ENCODE measurements at regions of chr3 and their contacts with region 1.

Region 1: GRCh38 chr3:107064445-107065060 is 312.7 kb upstream of the CCDC54 start:
- DNase-seq: peak; percentile 57
- ATAC-seq: peak; percentile 83
- H3K4me3 ChIP-seq: no peak overlapping the region
- H3K27ac ChIP-seq: no peak overlapping the region
- H3K4me1 ChIP-seq: peaks cover 7 to 10% of the 10 kb centered on the region in 2 experiments; a peak in 3 of 4 replicates
- H3K27me3 ChIP-seq: no peaks in the 10 kb centered on the region
- CTCF ChIP-seq: peak; percentile 45 to 88 (median 86); a peak in 5 of 6 replicates
- POLR2A ChIP-seq: no peak
- RAD21 ChIP-seq: peak; percentile 80

Region 2: DNA sequence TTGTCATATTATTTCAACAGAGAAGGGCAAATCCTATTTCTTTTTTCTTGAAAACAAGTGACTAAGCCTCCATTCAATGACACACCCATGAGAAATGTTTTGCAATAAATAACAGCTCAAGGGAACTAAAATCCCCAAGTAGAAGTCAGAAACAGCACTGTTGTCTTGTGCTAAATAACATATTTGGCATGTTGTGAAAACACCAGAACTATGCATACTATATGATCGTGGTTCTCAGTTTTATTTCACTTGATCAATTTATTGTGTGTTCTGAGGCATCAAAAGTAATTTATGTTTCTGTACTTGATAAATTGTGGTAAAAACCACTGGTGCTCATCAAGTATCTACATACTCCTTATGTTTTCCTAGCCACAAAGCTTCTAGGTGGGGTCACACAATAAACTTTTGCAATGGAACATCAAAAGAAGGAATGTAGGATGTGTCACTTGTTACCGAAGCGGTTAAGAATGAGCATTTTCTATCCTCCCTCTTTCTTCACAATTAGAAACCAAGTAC is 504.0 kb before region 1 on chr3:
- CTCF ChIA-PET with region 1: no interaction called
- POLR2A ChIA-PET with region 1: no interaction called
- RAD21 ChIA-PET with region 1: no interaction called
- intact Hi-C with region 1: no loop called
- DNase-seq: no peak
- ATAC-seq: peak; percentile 69; the same call in 1 of the 2 replicates
- H3K4me3 ChIP-seq: no peak overlapping the region
- H3K27ac ChIP-seq: no peak overlapping the region
- H3K4me1 ChIP-seq: peaks cover 0 to 13% of the 10 kb centered on the region in 2 experiments; a peak in 2 of 4 replicates
- H3K27me3 ChIP-seq: no peaks in the 10 kb centered on the region
- CTCF ChIP-seq: no peak
- POLR2A ChIP-seq: no peak
- RAD21 ChIP-seq: no peak

Region 3: DNA sequence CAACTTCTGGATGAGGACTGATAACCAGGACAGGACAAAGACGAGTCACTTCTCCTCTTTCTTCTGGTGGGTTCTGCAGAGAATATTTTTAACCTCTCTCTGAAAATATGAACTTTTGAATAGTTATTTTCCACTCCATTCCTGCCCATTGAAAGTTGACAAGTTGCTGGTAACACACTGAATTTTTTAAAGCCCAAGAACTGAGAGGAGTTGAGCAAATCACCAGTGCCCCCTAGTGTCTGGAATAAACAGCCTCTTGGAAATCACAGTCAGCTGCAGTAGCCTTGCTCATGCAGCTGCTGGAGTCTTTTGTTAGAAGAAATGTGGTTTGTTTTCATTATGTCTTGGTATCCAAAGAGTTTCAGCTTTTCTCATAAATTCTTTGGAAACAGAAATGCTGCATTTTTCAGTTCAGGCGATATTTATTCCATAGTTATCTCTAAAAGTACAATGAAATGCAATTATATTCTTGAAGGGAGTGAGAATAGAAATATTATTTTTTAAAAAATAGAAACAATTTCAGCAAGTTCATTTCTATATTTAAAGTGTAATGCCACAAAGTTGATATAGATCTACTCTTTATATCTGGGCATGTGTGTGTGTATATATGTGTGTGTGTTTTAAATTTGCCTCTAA is 454.8 kb before region 1 on chr3:
- CTCF ChIA-PET with region 1: no interaction called
- POLR2A ChIA-PET with region 1: no interaction called
- RAD21 ChIA-PET with region 1: no interaction called
- intact Hi-C with region 1: loop called (anchors 1 kb)
- DNase-seq: peak; percentile 62
- ATAC-seq: peak; percentile 82
- H3K4me3 ChIP-seq: no peak overlapping the region
- H3K27ac ChIP-seq: no peak overlapping the region
- H3K4me1 ChIP-seq: no peaks in the 10 kb centered on the region
- H3K27me3 ChIP-seq: no peaks in the 10 kb centered on the region
- CTCF ChIP-seq: peak; percentile 55 to 86 (median 82); a peak in 5 of 6 replicates
- POLR2A ChIP-seq: no peak
- RAD21 ChIP-seq: peak; percentile 85

Region 4: DNA sequence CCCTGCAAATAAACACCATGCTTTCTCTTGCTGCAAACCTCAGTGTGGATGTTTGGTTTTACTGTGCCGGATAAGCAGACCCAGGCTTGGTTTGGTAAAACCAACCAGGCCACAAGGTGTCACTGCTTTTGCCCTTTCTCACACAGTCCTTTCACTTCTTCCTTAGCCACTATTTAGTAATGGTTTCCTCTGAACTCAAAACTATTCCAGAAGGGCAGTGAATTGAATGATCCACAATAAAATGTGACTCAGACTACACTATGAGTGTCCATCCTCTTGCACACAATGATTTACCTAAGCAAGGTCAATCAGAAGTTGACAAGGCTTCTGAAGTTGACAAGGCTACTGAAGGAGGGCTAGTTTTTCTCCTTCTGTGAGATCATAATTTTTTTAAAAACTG is 239.7 kb before region 1 on chr3:
- CTCF ChIA-PET with region 1: no interaction called
- POLR2A ChIA-PET with region 1: no interaction called
- RAD21 ChIA-PET with region 1: no interaction called
- intact Hi-C with region 1: loop called (anchors 2 kb)
- DNase-seq: peak; percentile 12
- ATAC-seq: peak; percentile 84
- H3K4me3 ChIP-seq: no peak overlapping the region
- H3K27ac ChIP-seq: no peak overlapping the region
- H3K4me1 ChIP-seq: no peaks in the 10 kb centered on the region
- H3K27me3 ChIP-seq: no peaks in the 10 kb centered on the region
- CTCF ChIP-seq: peak; percentile 34 to 50 (median 50); a peak in 5 of 6 replicates
- POLR2A ChIP-seq: no peak
- RAD21 ChIP-seq: peak; percentile 51

Region 5: GRCh38 chr3:107028086-107028485 is 36.5 kb before region 1 on chr3:
- CTCF ChIA-PET with region 1: no interaction called
- POLR2A ChIA-PET with region 1: no interaction called
- RAD21 ChIA-PET with region 1: no interaction called
- intact Hi-C with region 1: no loop called
- DNase-seq: no peak
- ATAC-seq: no peak
- H3K4me3 ChIP-seq: no peak overlapping the region
- H3K27ac ChIP-seq: no peak overlapping the region
- H3K4me1 ChIP-seq: no peaks in the 10 kb centered on the region
- H3K27me3 ChIP-seq: no peaks in the 10 kb centered on the region
- CTCF ChIP-seq: no peak
- POLR2A ChIP-seq: no peak
- RAD21 ChIP-seq: no peak

Region 6: DNA sequence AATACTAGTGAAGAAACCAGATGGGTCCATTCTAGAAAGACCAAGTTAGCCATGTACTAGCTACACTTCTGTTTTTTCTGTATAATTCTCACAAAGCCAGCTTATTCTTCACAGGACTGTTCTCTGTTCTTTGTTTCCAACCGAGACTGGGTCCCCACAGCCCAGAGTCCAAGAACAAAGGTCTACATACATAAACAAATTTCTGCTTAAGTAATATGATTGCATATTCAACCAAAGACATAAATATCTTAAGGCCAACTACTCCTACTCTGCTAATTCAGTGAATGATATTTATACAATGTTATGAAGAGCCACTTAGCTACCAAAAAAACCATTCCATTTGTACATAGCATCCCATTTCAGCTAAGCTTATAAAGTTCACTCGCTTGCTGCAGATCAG is 12.8 kb after region 1 on chr3:
- CTCF ChIA-PET with region 1: interaction called, 12 read pairs
- POLR2A ChIA-PET with region 1: no interaction called
- RAD21 ChIA-PET with region 1: no interaction called
- intact Hi-C with region 1: no loop called
- DNase-seq: no peak
- ATAC-seq: no peak
- H3K4me3 ChIP-seq: no peak overlapping the region
- H3K27ac ChIP-seq: no peak overlapping the region
- H3K4me1 ChIP-seq: no peaks in the 10 kb centered on the region
- H3K27me3 ChIP-seq: no peaks in the 10 kb centered on the region
- CTCF ChIP-seq: no peak
- POLR2A ChIP-seq: no peak
- RAD21 ChIP-seq: no peak